ENCODE measurements at regions of chr3 and their contacts with region 1.

Region 1: DNA sequence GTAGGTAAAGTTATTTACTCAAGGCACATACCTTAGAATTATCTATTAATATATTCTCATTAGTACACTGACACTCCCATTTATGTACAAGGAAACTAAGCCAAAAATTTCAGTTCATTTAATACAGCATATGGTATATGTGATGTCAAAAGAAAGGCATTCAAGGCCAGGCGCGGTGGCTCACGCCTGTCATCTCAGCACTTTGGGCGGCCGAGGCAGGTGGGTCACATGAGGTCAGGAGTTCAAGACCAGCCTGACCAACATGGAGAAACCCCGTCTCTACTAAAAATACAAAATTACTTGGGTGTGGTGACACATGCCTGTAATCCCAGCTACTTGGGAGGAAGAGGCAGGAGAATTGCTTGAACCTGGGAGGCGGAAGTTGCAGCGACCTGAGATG is 435.2 kb downstream of the GBE1 start:
- DNase-seq: no peak
- CTCF ChIP-seq: no peak

Region 2: DNA sequence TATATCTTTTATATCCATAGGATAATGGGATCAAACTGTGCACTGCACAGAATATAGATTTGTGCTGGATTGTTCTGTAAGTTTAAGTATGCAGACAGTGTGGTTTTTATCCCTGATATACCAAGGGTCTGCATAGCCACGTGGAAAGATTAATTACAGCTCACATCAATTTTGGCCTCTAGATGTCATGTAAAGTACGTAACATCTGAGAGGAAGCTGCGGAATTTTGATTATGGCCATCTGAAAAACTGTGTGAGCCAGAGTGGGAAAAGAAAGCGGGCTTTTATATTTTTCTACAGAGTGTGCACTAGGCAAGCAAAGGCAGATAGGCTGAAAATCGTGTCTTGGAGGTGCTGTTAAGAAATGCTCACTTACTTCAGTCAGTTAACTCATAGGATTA is 127.5 kb before region 1 on chr3:
- CTCF ChIA-PET with region 1: no interaction called
- POLR2A ChIA-PET with region 1: no interaction called
- DNase-seq: no peak
- CTCF ChIP-seq: no peak

Region 3: DNA sequence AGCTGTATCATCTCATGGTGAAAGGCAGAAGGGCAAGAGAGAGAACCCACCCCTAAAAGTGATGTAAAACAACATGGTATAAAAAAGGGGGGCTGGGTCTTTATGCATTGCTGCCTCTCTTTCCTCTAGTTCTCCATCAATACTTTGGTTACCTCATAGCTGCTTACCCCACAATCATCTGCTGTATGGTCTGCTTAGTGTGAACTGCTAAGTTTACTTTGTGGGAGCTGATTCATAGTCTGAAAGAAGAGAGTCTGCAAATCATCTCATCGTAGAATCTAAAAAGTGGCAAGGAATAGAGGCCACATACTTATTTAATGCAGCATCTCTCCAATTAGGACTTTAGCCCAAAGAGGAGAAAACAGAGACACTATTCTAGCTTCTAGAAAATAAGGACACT is 111.6 kb before region 1 on chr3:
- CTCF ChIA-PET with region 1: no interaction called
- POLR2A ChIA-PET with region 1: no interaction called
- DNase-seq: no peak
- CTCF ChIP-seq: no peak

Region 4: GRCh38 chr3:81338676-81339555 is 12.7 kb after region 1 on chr3:
- CTCF ChIA-PET with region 1: interaction called, 12 read pairs
- POLR2A ChIA-PET with region 1: no interaction called
- DNase-seq: peak; percentile 27
- CTCF ChIP-seq: no peak

Region 5: DNA sequence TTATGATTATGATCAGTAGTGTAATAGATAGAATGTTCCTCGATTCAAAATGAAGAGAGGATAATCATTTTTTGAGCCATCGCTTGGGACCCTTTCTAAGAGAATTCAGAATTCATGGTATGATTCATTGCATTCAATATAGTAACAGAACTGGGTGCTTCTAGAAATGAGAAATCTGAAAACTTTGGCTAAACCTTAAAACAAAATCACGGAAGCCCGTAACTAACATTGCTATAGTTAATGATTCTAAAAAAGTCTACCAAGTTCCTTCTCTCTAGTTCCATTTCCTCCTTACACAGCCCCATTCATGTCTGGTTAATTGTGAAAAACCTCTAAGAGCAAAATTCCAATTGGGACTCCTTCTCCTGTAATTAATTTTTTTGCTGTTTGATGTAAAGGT is 218.1 kb after region 1 on chr3:
- CTCF ChIA-PET with region 1: no interaction called
- POLR2A ChIA-PET with region 1: no interaction called
- DNase-seq: no peak
- CTCF ChIP-seq: no peak

Measured in GM10248 (cell line).